PC-3 (cell line): ENCODE measurements at regions of chr7 and their contacts with region 1.

Region 1: DNA sequence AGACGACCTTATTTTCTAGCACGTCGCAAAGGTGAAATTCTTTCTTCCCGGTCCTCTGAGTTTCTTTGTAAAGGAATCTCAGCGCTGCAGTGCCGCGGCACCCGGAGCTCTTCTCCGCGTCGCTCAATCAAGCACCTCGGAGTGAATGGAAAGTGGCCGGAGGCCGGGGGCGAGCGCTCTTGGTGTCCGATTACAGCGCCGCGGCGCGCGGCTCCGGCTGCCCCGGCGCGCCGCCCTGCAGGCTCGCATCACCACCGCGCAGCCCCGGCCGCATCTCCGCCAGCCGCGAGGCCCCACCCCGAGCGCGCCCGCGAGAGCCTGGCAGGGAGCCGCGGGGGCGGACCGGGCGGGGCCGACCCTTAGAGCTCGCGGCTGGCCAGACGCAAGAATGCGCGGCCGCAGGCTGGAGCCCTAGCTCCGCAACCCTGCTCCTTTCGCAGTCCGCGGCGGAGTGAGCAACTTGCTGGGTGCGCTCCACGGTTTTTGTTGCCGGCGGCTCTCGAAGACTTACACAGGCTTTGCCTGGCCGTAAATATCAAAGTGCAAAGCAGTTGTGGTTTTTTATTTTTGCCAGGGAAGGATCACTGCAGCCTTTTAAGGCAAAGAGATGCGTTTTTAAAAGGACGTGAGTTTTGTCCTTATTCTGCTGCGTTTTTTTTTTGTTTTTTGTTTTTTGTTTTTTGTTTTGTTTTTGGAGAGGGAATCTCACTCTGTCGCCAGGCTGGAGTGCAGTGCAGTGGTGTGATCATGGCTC is at the start of gene SEMA3C:
- DNase-seq: peak; percentile 95
- ATAC-seq: peak; percentile 73
- H3K4me3 ChIP-seq: peak within 1 kb of the TSS; percentile 96
- H3K27ac ChIP-seq: peak within 1 kb of the TSS; percentile 98
- H3K4me1 ChIP-seq: peaks cover 71% of the 10 kb centered on the region
- H3K27me3 ChIP-seq: no peaks in the 10 kb centered on the region
- CTCF ChIP-seq: no peak
- total RNA-seq, gene SEMA3C: 27.4 and 28.0 TPM in 2 replicates

Region 2: GRCh38 chr7:80748363-80749042 is 170.6 kb before region 1 on chr7:
- CTCF ChIA-PET with region 1: no interaction called
- POLR2A ChIA-PET with region 1: interaction called, 15 read pairs
- intact Hi-C with region 1: no loop called
- DNase-seq: no peak
- ATAC-seq: no peak
- H3K4me3 ChIP-seq: no peak overlapping the region
- H3K27ac ChIP-seq: no peak overlapping the region
- H3K4me1 ChIP-seq: no peaks in the 10 kb centered on the region
- H3K27me3 ChIP-seq: no peaks in the 10 kb centered on the region
- CTCF ChIP-seq: no peak

Region 3: DNA sequence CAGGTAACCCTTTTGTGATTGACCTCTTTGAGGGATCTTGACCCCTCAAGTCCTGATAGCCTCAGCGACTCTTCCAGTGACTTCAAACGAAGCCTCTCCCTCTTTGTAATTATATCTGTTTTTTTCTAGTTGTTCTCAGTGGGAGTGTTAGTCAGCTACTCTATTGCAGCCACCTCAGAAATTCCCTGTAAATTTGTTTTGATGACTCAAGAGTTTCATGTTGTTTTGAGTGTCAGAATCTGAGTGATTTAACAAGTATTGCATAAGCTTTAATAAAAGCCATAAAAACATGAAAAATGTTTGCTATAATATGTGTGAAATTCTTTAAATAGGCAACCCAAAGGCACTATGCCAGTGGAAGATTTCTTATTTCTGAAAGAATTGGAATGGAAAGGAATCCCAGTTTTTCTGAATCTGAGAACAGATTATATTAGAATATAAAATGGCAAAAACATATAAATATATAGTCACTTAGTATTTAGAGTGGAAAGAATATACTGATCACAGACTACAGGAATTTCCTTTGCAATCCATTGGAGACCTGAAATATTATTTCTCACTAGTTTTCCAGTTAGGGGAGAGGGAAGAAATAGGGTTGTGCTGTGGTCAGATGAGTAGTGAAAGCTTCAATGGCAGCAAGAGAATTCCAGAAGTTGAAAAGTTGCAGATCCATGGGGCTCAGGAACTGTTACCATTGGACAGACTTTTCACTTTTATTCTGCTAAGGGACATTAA is 94.2 kb after region 1 on chr7:
- CTCF ChIA-PET with region 1: no interaction called
- POLR2A ChIA-PET with region 1: interaction called, 3 read pairs
- intact Hi-C with region 1: loop called (anchors 1 kb)
- DNase-seq: peak; percentile 71
- ATAC-seq: peak; percentile 93
- H3K4me3 ChIP-seq: no peak overlapping the region
- H3K27ac ChIP-seq: peak overlapping the region; percentile 76
- H3K4me1 ChIP-seq: peaks cover 24% of the 10 kb centered on the region
- H3K27me3 ChIP-seq: no peaks in the 10 kb centered on the region
- CTCF ChIP-seq: no peak

Region 4: DNA sequence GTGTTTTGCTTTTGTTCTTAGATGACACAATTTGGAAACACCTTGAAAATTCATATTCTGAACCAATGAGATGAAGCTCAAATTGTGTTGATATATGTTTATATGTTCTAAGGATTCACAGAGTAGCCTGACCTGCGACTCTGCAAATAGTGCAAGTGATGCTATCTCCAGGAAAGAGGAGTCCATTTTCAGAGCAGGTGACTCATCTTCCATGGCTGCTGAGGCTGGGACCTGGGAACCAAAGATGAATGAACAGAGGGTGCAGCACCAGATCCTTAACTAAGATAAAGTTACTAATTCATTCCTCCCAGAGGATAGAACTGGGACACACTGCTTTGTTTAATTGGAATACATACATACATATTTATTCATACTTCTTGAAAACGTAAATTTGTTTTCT is 240.3 kb after region 1 on chr7:
- CTCF ChIA-PET with region 1: no interaction called
- POLR2A ChIA-PET with region 1: interaction called, 15 read pairs
- intact Hi-C with region 1: loop called (anchors 1 kb)
- DNase-seq: peak; percentile 84
- ATAC-seq: peak; percentile 67
- H3K4me3 ChIP-seq: no peak overlapping the region
- H3K27ac ChIP-seq: peak overlapping the region; percentile 64
- H3K4me1 ChIP-seq: peaks cover 27% of the 10 kb centered on the region
- H3K27me3 ChIP-seq: no peaks in the 10 kb centered on the region
- CTCF ChIP-seq: no peak

Region 5: GRCh38 chr7:81256991-81257390 is 337.9 kb after region 1 on chr7:
- CTCF ChIA-PET with region 1: interaction called, 4 read pairs
- POLR2A ChIA-PET with region 1: no interaction called
- intact Hi-C with region 1: loop called (anchors 1 kb)
- DNase-seq: peak; percentile 8
- ATAC-seq: no peak
- H3K4me3 ChIP-seq: no peak overlapping the region
- H3K27ac ChIP-seq: no peak overlapping the region
- H3K4me1 ChIP-seq: no peaks in the 10 kb centered on the region
- H3K27me3 ChIP-seq: no peaks in the 10 kb centered on the region
- CTCF ChIP-seq: peak; percentile 60

Region 6: DNA sequence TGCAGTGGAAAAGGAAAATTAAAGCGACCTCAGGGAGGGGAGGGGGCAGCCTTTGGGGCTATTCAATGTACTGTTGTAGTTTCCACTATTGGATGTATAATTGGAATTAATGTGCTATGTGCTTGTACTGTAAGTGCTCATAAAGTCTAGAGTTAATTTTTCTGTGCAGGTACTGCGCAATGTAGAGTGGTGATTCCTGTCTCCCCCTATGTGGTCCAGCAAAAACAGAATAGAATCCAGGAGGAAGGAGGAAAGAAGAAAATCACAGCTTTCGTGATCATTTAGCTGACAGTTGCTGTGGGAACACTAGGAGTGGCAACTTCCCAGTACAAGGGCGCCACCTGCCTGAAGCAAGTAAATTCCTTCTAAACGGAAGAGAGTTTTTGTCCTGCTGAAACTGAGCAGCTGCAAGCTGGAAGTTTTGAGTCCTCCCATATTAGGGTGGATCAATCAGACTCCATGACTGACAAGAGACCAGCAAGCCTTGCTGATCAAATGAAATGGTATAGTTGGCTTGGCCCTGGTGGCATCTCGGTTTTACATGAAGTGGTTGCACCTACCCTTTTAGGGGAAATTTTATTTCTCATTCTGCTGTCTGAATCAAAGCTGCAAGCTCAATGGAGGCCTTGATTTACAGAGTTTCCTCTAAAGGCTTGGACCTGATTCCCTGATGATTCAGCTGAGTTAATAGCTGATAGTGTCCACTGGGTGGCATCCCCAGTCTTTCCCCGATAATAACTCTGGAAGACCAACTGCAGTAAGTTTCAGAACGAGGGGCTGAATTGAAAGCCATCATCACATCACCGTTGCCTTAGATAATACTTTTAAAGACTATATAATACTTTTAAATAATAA is 551.0 kb after region 1 on chr7:
- CTCF ChIA-PET with region 1: interaction called, 6 read pairs
- POLR2A ChIA-PET with region 1: interaction called, 12 read pairs
- intact Hi-C with region 1: no loop called
- DNase-seq: peak; percentile 70
- ATAC-seq: peak; percentile 98
- H3K4me3 ChIP-seq: no peak overlapping the region
- H3K27ac ChIP-seq: no peak overlapping the region
- H3K4me1 ChIP-seq: no peaks in the 10 kb centered on the region
- H3K27me3 ChIP-seq: no peaks in the 10 kb centered on the region
- CTCF ChIP-seq: peak; percentile 80